ENCODE measurements at regions of chr11 and their contacts with region 1.

Region 1: DNA sequence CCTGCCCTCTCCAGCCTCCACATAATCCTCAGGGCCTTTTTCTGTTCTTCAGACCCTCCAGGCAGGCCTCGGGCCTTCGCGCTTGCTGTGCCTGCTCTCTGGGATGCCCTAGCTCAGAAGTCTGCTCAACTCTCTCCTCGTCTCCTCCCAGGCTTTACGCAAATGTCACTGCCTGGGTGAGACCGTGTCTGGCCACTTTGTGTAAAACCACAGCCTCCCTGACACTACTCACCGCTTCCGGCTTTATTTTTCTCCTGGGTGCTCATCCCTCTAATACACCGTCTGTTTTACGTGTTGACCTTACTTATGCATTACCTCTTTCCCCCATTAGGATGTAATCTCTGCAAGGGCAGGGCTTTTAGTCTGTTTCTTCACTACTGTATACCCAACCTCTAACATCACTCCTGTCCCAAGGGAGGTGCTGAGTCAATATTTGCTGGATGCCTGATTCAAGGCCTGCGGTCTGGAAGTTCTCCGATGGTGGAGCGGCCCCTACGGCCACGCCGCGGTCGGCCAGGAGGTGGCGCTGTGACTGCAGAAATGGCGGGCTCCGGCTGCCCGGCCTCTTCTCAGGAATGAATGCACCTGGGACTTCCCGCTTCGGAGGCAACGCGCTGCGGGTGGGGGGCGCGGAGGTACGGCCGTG is 58.2 kb upstream of the THY1 start:
- DNase-seq: peak; percentile 85

Region 2: GRCh38 chr11:119533921-119534736 is 53.0 kb after region 1 on chr11:
- intact Hi-C with region 1: loop called (anchors 5 kb)
- DNase-seq: peak; percentile 82

Region 3: DNA sequence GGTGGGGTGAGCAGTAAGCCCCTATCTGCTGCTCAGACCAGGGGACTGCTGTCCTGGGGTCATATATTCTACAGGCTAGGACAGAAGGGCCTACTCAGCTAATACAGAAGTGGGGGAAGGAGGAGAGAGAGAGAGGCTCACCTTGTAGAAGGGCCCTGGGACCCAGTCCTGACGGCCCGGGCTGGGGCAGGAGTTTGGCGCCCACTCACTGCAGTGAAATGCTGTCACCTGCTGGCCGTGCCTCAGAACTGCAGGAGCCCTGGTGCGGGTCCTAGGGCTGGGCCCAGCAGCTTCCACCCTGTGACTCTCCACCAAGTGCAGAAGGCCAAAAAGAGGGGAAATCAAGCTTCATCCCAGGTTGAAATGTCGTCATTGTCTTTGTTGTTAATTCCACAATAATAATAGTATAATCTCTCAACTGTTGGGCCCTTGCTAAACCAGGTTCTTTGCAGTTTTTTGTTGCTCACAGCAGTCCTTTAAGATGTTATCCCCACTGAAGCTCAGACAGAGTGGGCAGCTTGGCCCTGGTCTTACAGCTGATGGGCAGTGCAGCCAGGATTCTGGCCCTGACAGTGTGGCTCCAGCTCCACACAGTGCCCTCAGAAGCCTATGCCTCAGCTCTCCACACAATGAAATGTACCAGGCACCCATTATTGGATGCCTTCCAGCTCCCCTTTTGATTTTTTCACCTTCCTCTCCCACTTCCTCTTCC is 627.2 kb after region 1 on chr11:
- intact Hi-C with region 1: loop called (anchors 2 kb)
- DNase-seq: no peak